Activated CD4-positive, alpha-beta T cell treated with anti-CD3 and anti-CD28 coated beads, Interleukin-2, amount 10 ng/mL, durations not matched to agents 24 days and 14 days (primary cell): ENCODE measurements at regions of chr4 and their contacts with region 1.

Region 1: GRCh38 chr4:146916479-146917076 is 29.1 kb downstream of the TTC29 start:
- DNase-seq: peak; percentile 73
- H3K4me3 Mint-ChIP-seq: no peak overlapping the region
- H3K27ac Mint-ChIP-seq: no peak overlapping the region
- H3K4me1 Mint-ChIP-seq: no peaks in the 10 kb centered on the region
- H3K27me3 Mint-ChIP-seq: peaks cover 8% of the 10 kb centered on the region

Region 2: GRCh38 chr4:145956288-145956890 is 960.2 kb before region 1 on chr4:
- intact Hi-C with region 1: loop called (anchors 5 kb)
- DNase-seq: peak; percentile 82
- H3K4me3 Mint-ChIP-seq: no peak overlapping the region
- H3K27ac Mint-ChIP-seq: no peak overlapping the region
- H3K4me1 Mint-ChIP-seq: peaks cover 2% of the 10 kb centered on the region
- H3K27me3 Mint-ChIP-seq: peaks cover 6% of the 10 kb centered on the region

Region 3: GRCh38 chr4:146095091-146095690 is 821.4 kb before region 1 on chr4:
- intact Hi-C with region 1: loop called (anchors 2 kb)
- DNase-seq: peak; percentile 77
- H3K4me3 Mint-ChIP-seq: no peak overlapping the region
- H3K27ac Mint-ChIP-seq: no peak overlapping the region
- H3K4me1 Mint-ChIP-seq: no peaks in the 10 kb centered on the region
- H3K27me3 Mint-ChIP-seq: peaks cover 10% of the 10 kb centered on the region

Region 4: GRCh38 chr4:146833530-146833929 is 83.0 kb before region 1 on chr4:
- intact Hi-C with region 1: no loop called
- DNase-seq: no peak
- H3K4me3 Mint-ChIP-seq: no peak overlapping the region
- H3K27ac Mint-ChIP-seq: no peak overlapping the region
- H3K4me1 Mint-ChIP-seq: no peaks in the 10 kb centered on the region
- H3K27me3 Mint-ChIP-seq: peaks cover 2% of the 10 kb centered on the region

Region 5: GRCh38 chr4:146890301-146890700 is 26.3 kb before region 1 on chr4:
- intact Hi-C with region 1: no loop called
- DNase-seq: no peak
- H3K4me3 Mint-ChIP-seq: no peak overlapping the region
- H3K27ac Mint-ChIP-seq: no peak overlapping the region
- H3K4me1 Mint-ChIP-seq: no peaks in the 10 kb centered on the region
- H3K27me3 Mint-ChIP-seq: peaks cover 2% of the 10 kb centered on the region